Lower leg skin (tissue), 4 donors: ENCODE measurements at regions of chr3 and their contacts with region 1.

Region 1: DNA sequence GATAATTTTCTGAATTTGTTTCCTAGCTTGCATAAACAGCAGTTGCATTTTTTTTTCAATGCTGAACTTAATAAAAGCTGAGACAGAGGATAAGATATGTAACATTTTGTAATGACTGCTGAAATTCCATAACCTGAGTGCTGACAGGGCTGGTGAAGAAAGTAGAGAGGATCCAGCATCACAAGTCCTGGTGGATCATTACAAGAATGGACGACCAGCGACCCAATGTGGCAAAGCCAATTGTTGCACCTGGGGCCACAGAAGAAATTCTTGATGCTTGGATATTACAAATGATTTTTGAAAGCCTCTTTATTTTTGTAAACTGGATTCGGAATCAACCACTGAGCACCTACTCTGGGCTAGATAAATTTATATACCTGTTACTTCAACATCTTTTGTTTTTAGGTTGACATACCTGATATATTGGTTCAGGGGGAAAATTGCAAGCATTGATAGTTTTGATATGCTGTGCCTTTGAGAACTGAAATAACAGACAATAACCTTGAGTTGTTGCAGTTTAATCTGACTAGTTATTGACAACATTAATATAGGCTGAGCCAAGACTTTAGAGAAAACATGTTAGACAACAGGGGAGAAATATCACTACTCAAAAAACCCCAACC is 3.9 kb upstream of the ACTL6A start:
- DNase-seq: peak; percentile 57 to 90
- H3K4me3 ChIP-seq: no peak overlapping the region
- CTCF ChIP-seq: no peak
- POLR2A ChIP-seq: no peak

Region 2: DNA sequence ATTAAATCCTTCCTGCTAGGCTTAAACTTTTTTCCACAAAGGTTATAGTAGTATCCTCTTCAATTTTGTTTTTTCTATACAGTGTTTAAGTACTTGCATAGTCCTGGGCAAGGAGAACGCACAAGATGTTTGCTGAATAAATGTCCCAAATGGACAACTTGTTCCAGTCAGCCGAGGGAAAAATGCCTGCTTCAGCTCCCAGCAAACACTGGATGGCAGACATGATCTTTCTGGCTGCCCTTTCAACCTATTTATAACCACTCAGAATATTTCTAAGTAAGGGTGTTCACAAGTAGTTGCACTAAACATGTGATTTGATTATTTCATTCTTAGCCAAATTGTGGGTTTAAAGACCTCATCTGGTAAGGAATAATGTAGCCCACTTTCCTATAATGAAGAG is 137.4 kb before region 1 on chr3:
- intact Hi-C with region 1: loop called (anchors 10 kb)
- DNase-seq: no peak
- H3K4me3 ChIP-seq: no peak overlapping the region
- CTCF ChIP-seq: no peak
- POLR2A ChIP-seq: no peak